ENCODE measurements at regions of chr2 and their contacts with region 1.

Region 1: DNA sequence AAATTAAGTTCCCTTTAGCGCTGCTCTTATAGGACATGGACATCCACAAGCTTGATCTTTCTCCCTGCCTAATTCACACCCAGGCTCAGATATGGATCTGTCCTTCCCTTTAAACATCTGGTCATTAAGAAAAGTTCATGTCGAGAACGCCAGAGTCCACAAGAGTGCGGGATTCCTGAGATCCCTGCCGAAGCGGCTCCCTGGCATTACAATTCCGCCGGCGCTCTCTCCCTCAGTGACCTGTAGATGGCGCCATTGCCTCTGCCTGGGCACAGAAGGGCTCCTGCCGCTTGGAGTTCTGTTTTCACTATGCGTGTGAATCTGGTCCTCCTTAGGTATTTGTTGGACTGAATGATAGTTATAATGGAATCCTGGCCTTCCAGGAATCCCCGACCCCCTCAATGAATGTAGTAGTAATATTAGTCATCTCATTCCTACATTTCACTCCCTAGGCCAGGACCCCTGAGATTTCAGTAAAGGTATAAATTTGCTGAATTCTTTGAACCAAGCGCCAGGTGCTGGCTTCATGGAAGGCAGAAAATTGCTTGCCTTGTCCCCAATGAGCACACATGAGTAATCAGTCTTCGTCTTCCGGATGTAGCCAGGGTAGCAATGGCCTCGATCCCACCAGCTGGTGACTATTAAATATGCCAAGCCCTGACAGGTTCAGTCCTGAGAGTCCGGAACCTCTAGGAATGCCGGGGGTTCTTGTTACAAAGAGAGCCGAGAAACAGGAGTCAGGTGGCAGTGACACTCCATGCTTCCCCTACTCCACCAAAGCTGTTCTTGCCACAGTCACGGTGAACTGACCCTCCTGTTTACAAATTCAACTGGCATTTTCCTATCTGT is 26.4 kb upstream of the CD207 start:
- DNase-seq: peak; percentile 82
- ATAC-seq: peak; percentile 87
- H3K4me3 Mint-ChIP-seq: no peak overlapping the region
- H3K27ac Mint-ChIP-seq: no peak overlapping the region
- H3K4me1 Mint-ChIP-seq: peaks cover 3% of the 10 kb centered on the region
- H3K27me3 Mint-ChIP-seq: peaks cover 28% of the 10 kb centered on the region
- CTCF ChIP-seq: peak; percentile 99

Region 2: DNA sequence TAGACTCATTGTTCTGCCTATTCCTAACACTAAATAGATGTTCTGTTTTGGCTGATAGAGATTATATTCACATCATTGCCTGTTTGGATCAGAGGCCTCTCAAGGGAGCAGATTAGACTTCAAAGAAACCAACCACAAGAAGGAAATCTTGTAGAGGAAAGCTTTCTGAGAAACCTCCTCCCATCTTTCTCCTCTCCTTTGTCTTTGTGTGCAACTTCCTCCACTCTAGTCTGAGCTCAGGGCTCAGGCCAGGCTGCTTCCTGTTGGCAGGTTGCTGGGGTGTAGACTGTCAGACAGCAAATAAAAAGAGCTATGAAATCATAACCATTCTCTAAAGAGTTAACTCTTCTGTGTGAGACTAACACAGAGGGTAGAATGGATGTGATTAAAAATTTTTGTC is 421.4 kb before region 1 on chr2:
- CTCF ChIA-PET with region 1: no interaction called
- POLR2A ChIA-PET with region 1: no interaction called
- intact Hi-C with region 1: no loop called
- DNase-seq: peak; percentile 50
- ATAC-seq: peak; percentile 80
- H3K4me3 Mint-ChIP-seq: no peak overlapping the region
- H3K27ac Mint-ChIP-seq: peak overlapping the region; percentile 93
- H3K4me1 Mint-ChIP-seq: peaks cover 20% of the 10 kb centered on the region
- H3K27me3 Mint-ChIP-seq: no peaks in the 10 kb centered on the region
- CTCF ChIP-seq: no peak

Region 3: GRCh38 chr2:70656421-70657010 is 205.5 kb before region 1 on chr2:
- CTCF ChIA-PET with region 1: interaction called, 3 read pairs
- POLR2A ChIA-PET with region 1: no interaction called
- intact Hi-C with region 1: loop called (anchors 5 kb)
- DNase-seq: peak; percentile 70
- ATAC-seq: peak; percentile 67
- H3K4me3 Mint-ChIP-seq: peak overlapping the region; percentile 27
- H3K27ac Mint-ChIP-seq: peak overlapping the region; percentile 61
- H3K4me1 Mint-ChIP-seq: peaks cover 34% of the 10 kb centered on the region
- H3K27me3 Mint-ChIP-seq: peaks cover 6% of the 10 kb centered on the region
- CTCF ChIP-seq: no peak

Region 4: DNA sequence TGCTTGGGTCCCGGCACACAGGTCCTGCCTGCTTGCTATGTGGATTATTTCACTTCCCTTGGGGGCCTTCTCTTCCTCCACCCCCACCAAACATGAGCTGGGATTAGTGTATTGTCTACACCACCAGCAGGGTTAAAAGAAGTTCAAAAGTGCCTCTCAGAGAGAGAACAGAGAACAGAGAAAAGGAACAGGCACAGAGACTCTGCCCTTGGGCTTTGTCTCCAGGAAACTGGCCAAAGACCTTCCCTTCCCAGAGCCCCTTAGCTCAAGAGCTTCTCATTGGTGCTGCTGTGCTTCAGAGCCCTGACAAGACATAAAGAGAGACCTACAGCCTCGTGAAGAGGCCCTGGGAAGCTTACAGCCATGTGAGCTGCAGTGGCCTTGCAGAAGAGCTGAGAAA is 64.5 kb before region 1 on chr2:
- CTCF ChIA-PET with region 1: interaction called, 10 read pairs
- POLR2A ChIA-PET with region 1: no interaction called
- intact Hi-C with region 1: no loop called
- DNase-seq: no peak
- ATAC-seq: no peak
- H3K4me3 Mint-ChIP-seq: no peak overlapping the region
- H3K27ac Mint-ChIP-seq: no peak overlapping the region
- H3K4me1 Mint-ChIP-seq: peaks cover 2% of the 10 kb centered on the region
- H3K27me3 Mint-ChIP-seq: peaks cover 11% of the 10 kb centered on the region
- CTCF ChIP-seq: no peak

Region 5: DNA sequence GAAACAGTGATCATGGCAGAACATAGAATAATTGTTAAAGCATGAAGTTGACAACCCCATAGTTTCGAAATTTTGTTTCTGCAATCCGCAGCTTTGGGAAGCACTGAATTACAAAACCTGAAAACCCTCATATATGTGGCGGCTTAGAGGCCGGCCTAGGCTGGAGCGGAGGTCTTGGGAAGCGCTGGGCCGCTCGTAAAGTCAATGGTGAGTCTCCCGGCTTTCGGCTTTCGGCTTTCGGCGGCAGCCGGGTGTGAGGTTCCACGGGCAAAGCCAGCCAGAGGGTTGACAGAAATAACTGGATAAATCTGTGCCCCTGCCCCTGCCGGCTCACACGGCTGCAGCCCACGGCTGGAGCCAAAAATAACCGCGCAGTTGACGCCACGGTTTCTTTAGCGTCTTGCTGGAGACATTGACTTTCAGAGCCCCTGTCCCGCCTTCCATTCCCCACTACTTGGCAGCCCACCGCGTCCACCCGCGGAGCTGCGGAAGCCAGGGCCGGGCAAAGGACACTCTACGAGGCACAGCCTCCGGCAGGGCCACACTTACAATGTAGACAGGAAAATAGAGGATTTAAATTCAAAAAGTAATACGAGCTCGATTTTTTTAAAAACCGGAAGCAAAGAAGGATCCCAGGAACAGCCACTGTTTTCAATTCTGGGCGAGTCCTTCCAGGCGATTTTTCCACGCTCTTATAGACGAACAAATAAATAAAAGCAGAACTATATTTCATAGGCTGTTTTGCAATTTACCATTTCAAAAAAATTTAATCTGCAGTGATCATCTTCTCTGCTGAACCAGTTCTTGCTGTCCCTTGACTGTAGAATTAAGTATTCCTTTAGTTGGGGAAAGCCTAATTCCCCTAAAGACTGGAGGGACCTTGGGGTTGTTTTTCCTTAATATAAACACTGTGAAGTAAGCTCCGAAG is 45.4 kb after region 1 on chr2:
- CTCF ChIA-PET with region 1: interaction called, 10 read pairs
- POLR2A ChIA-PET with region 1: no interaction called
- intact Hi-C with region 1: no loop called
- DNase-seq: no peak
- ATAC-seq: no peak
- H3K4me3 Mint-ChIP-seq: peak overlapping the region; percentile 54
- H3K27ac Mint-ChIP-seq: no peak overlapping the region
- H3K4me1 Mint-ChIP-seq: peaks cover 10% of the 10 kb centered on the region
- H3K27me3 Mint-ChIP-seq: peaks cover 73% of the 10 kb centered on the region
- CTCF ChIP-seq: no peak

Region 6: DNA sequence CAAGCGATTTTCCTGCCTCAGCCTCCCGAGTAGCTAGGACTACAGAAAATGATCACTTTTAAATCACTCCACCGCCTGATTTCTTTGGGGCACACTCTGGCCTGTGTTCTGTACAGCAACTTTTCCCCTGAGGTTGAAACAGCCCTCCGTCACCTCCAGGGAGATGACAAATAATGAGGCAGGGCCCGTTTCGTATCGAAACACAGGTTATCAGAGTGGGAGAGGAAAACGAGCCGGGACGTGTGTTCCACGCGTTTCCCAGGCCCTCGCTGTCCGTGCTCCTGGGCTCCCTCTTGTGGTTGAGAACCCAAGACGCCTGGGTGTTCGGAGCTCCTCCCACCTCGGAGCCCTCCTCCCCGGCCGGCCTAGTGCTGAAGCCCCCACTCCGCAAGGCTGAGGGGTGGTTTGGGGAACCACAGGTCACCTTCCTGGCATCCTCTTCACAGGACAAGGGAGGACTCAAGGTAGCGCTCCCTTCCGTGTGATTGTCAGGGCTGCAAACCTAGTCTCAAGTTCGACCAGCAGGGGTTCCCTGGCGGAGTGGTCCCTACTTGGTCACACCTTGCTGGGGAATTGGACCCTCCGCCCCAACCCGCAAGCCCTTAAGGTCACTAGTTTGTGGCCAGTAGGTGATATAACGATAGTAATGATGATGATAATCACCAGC is 86.5 kb after region 1 on chr2:
- CTCF ChIA-PET with region 1: interaction called, 117 read pairs
- POLR2A ChIA-PET with region 1: no interaction called
- intact Hi-C with region 1: no loop called
- DNase-seq: peak; percentile 85
- ATAC-seq: peak; percentile 96
- H3K4me3 Mint-ChIP-seq: peak overlapping the region; percentile 74
- H3K27ac Mint-ChIP-seq: peak overlapping the region; percentile 51
- H3K4me1 Mint-ChIP-seq: peaks cover 6% of the 10 kb centered on the region
- H3K27me3 Mint-ChIP-seq: peaks cover 10% of the 10 kb centered on the region
- CTCF ChIP-seq: peak; percentile 88